Activated CD8-positive, alpha-beta T cell treated with anti-CD3 and anti-CD28 coated beads, Interleukin-2, amount 10 ng/mL, durations not matched to agents 7 days and 5 days (primary cell): ENCODE measurements at regions of chr7 and their contacts with region 1.

Region 1: DNA sequence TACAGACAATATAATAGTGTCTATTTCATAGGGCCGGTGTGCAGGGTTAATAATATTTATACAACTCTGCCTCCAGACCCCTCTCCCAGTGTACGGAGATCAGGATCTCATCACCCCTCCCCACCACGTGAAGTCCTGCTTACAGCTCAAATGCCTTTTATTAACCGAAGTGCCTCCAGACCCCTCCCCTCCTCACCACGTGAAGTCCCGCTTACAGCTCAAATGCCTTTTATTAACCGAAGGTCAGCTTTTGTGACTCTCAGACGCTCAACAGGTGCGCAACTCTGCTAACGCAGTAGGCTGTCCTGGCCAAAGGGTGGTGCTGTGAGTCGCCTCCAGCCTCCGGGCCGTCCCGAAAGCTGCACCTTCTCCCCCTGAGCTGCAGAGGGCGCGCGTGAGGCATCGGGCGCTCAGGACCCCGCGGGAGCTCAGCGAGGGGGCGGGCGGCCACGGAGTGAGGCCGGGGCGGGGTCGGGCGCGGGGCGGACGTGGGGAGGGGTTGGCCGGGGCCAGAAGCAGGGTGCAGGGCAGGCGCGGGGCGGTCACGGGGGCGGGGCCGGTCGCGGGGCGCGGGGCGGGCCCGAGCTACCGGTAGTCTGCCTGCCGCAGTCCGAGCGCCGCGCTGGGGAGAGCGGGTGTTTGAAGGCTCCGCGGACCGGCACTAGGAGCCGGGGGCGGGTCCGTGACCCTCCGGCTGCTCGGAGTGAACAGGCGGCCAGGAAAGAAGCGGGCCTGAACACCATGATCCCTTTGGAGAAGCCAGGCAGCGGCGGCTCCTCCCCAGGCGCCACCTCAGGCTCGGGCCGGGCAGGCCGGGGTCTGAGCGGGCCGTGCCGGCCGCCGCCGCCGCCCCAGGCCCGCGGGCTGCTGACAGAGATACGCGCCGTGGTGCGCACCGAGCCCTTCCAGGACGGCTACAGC is at the start of gene STK17A:
- DNase-seq: peak; percentile 94
- ATAC-seq: peak; percentile 77
- H3K4me3 Mint-ChIP-seq: peak within 1 kb of the TSS; percentile 97
- H3K27ac Mint-ChIP-seq: peak within 1 kb of the TSS; percentile 99
- H3K4me1 Mint-ChIP-seq: peaks cover 31% of the 10 kb centered on the region
- H3K27me3 Mint-ChIP-seq: peaks cover 18% of the 10 kb centered on the region
- total RNA-seq, gene STK17A: 67.9 to 69.0 TPM

Region 2: GRCh38 chr7:43439631-43440401 is 142.9 kb before region 1 on chr7:
- CTCF ChIA-PET with region 1: interaction called, 12 read pairs
- POLR2A ChIA-PET with region 1: no interaction called
- DNase-seq: peak; percentile 68
- ATAC-seq: peak; percentile 81
- H3K4me3 Mint-ChIP-seq: no peak overlapping the region
- H3K27ac Mint-ChIP-seq: no peak overlapping the region
- H3K4me1 Mint-ChIP-seq: no peaks in the 10 kb centered on the region
- H3K27me3 Mint-ChIP-seq: peaks cover 9% of the 10 kb centered on the region

Region 3: DNA sequence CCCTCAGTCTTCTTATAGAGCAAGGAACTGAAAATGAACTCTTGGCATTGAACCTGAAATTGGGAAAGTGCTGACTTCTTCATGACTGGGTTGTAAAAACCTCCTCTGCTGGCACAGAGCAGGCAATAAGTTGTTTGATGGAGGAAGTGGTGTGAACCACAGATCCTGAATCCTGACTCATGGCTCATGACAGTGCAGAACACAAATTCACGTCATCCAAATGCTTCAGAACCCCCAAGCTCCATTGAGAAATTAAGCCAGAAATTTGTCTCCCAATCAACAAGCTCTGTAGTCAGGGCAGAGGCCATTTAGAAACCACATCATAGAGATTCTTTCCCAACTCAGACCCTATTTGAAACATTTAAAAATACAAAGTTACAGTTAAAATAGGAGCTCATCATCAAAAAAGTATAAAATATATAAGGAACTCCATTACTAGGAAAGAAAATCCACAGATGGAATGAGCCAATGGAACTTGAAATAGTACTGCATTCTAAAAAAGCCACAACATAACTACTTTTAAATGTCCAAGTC is 10.2 kb before region 1 on chr7:
- CTCF ChIA-PET with region 1: interaction called, 108 read pairs
- POLR2A ChIA-PET with region 1: interaction called, 26 read pairs
- DNase-seq: peak; percentile 63
- ATAC-seq: peak; percentile 88
- H3K4me3 Mint-ChIP-seq: no peak overlapping the region
- H3K27ac Mint-ChIP-seq: no peak overlapping the region
- H3K4me1 Mint-ChIP-seq: peaks cover 30% of the 10 kb centered on the region
- H3K27me3 Mint-ChIP-seq: no peaks in the 10 kb centered on the region

Region 4: DNA sequence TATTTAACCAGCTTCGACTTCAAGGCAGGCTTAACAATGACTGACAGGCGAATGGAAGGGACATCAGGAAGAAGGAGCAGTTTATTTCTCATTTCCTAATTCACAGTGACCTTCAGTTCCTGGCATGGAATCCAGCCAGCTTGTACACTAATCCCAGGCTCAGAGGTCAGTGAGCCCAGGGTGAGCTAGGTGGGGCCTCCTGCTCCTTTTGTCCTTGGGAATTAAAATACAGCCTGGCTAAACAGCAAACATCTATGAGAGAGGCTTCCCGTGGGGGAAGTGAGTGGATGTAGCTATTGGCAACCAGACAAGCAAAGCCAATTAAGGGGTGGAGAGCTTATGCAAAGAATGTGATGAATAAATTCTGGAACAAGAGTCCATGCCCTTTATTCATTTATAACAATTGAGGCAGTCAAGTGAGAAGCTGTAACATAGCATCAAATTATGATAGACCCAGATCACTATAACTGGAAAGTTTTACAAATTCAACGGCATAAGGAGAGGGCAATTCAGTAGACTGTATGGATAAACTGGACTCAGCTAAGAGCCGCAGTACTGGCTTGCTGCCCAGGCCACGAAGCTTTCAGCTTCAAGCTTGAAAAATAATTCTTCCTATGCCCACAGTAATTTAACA is 57.2 kb after region 1 on chr7:
- CTCF ChIA-PET with region 1: interaction called, 150 read pairs
- POLR2A ChIA-PET with region 1: interaction called, 31 read pairs
- DNase-seq: no peak
- ATAC-seq: no peak
- H3K4me3 Mint-ChIP-seq: no peak overlapping the region
- H3K27ac Mint-ChIP-seq: peak overlapping the region; percentile 48
- H3K4me1 Mint-ChIP-seq: peaks cover 79% of the 10 kb centered on the region
- H3K27me3 Mint-ChIP-seq: no peaks in the 10 kb centered on the region

Region 5: GRCh38 chr7:43693687-43694398 is 111.1 kb after region 1 on chr7:
- CTCF ChIA-PET with region 1: interaction called, 508 read pairs
- POLR2A ChIA-PET with region 1: interaction called, 79 read pairs
- DNase-seq: no peak
- ATAC-seq: no peak
- H3K4me3 Mint-ChIP-seq: no peak overlapping the region
- H3K27ac Mint-ChIP-seq: no peak overlapping the region
- H3K4me1 Mint-ChIP-seq: peaks cover 30% of the 10 kb centered on the region
- H3K27me3 Mint-ChIP-seq: no peaks in the 10 kb centered on the region

Region 6: DNA sequence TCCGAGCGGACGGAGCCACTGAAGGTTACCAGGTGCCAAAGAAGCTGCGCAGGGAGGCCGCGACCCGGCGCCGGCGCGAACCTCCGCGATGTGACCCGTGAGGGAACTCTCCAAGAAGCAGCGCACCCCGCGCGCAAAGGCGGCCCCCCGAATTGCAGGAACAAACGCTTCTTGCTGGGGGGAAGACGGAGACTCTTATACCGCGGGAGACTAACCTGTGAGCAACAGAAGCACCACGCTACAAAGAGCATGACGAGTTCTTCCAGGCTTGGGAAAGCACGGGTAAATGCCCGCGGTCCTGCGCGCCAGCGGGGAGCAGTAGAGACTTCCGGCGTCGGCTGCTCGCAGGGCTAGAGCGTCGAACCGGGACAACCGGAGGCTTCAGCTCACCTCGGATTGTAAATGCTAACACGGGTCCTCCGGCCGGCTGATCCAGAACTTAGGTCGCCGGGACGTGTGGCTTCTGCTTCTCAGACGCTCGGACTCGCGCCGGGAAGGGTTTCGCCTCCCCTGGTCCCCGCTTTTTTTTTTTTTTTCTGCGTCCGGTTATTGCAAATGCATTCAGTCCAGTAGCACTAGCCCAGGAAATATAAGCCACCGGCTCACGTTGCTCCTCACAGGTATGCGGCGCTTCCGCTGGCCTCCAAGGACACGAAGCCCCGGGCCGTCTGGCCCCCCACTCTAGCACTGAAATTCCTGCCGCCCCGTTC is 146.6 kb after region 1 on chr7 and contains the start of gene COA1:
- CTCF ChIA-PET with region 1: interaction called, 34 read pairs
- POLR2A ChIA-PET with region 1: interaction called, 12 read pairs
- DNase-seq: peak; percentile 83
- ATAC-seq: peak; percentile 97
- H3K4me3 Mint-ChIP-seq: peak within 1 kb of the TSS; percentile 93
- H3K27ac Mint-ChIP-seq: peak within 1 kb of the TSS; percentile 84
- H3K4me1 Mint-ChIP-seq: peaks cover 37% of the 10 kb centered on the region
- H3K27me3 Mint-ChIP-seq: peaks cover 3% of the 10 kb centered on the region
- total RNA-seq, gene COA1: 52.0 to 52.7 TPM

Region 7: DNA sequence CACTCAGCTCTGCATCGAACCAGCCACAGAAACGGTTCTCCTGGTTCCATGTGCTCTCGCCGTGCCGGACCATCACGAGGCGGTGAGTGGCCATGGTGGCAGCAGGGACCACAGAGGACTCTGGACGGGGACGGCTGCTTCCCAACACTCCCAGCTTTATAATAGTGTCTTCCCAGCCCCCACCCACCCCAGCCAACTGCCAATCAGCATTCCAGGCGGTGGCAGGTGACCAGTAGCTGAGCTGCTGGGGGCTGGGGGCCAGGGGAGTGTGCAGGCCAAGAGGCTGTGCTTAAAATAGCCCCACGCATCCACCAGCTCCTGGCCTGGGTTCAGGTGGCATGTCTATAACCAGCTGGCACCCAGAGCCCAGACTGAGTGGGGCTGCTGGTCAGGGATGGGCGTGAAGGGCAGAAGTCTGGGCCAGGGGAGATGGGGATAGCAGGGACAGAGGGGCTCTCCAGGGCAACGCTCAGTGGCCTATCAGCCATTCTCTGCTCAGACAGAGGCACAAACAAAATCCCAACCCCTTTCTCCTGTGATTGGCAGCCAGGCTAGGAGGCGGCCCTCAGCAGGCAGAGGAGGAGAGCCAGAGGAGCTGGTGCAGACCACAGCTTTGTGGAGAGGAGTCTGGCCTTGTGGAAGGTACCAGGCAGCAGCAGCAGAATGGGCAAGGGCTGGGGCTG is 482.8 kb after region 1 on chr7 and contains the start of gene PGAM2:
- CTCF ChIA-PET with region 1: no interaction called
- POLR2A ChIA-PET with region 1: no interaction called
- DNase-seq: no peak
- ATAC-seq: peak; percentile 42
- H3K4me3 Mint-ChIP-seq: no peak within 1 kb of the TSS
- H3K27ac Mint-ChIP-seq: peak within 1 kb of the TSS; percentile 49
- H3K4me1 Mint-ChIP-seq: peaks cover 12% of the 10 kb centered on the region
- H3K27me3 Mint-ChIP-seq: no peaks in the 10 kb centered on the region
- total RNA-seq, gene PGAM2: 0.34 to 0.68 TPM